ENCODE measurements at regions of chr3 and their contacts with region 1.

Region 1: GRCh38 chr3:50260027-50260941 is 8.7 kb upstream of the SEMA3B start:
- DNase-seq: peak; percentile 91
- ATAC-seq: peak; percentile 67
- H3K4me3 ChIP-seq: peak overlapping the region; percentile 50 to 76 (median 62); a peak in 5 of 6 replicates
- H3K27ac ChIP-seq: peak overlapping the region; percentile 99
- H3K4me1 ChIP-seq: peaks cover 60% of the 10 kb centered on the region
- H3K27me3 ChIP-seq: no peaks in the 10 kb centered on the region
- CTCF ChIP-seq: peak; percentile 92
- EP300 ChIP-seq: peak; percentile 85 to 92; a peak in 3 of 4 replicates
- POLR2A ChIP-seq: peak in 1 of 2 experiments; percentile 54; a peak in 1 of 4 replicates
- RAD21 ChIP-seq: peak; percentile 100

Region 2: DNA sequence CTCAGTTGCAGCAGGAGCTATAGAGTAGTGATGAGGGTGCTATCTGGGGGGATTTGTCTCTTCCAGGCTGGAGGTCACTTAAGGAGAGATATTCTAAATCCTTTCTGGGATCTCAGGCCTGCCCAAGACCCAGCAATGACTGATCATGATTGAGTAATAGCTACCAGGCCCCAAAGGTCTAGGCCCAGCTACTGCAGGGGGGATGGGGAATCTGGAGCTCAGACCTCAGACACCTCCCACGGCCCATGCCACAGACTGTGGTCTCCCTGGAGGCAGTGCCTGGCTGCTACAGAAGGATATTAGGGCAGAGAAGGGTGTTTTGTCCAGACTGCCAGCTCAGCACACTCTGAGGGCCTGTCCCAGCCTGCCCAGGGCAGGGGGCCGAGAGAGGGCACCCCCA is 48.4 kb before region 1 on chr3:
- CTCF ChIA-PET with region 1: no interaction called
- POLR2A ChIA-PET with region 1: interaction called, 82 read pairs
- in situ Hi-C with region 1: no loop called
- intact Hi-C with region 1: no loop called
- DNase-seq: no peak
- ATAC-seq: no peak
- H3K4me3 ChIP-seq: peak overlapping the region in 1 of 3 experiments; percentile 17; a peak in 1 of 6 replicates
- H3K27ac ChIP-seq: peak overlapping the region; percentile 99
- H3K4me1 ChIP-seq: peaks cover 74% of the 10 kb centered on the region
- H3K27me3 ChIP-seq: no peaks in the 10 kb centered on the region
- CTCF ChIP-seq: no peak
- EP300 ChIP-seq: no peak
- POLR2A ChIP-seq: no peak
- RAD21 ChIP-seq: no peak

Region 3: DNA sequence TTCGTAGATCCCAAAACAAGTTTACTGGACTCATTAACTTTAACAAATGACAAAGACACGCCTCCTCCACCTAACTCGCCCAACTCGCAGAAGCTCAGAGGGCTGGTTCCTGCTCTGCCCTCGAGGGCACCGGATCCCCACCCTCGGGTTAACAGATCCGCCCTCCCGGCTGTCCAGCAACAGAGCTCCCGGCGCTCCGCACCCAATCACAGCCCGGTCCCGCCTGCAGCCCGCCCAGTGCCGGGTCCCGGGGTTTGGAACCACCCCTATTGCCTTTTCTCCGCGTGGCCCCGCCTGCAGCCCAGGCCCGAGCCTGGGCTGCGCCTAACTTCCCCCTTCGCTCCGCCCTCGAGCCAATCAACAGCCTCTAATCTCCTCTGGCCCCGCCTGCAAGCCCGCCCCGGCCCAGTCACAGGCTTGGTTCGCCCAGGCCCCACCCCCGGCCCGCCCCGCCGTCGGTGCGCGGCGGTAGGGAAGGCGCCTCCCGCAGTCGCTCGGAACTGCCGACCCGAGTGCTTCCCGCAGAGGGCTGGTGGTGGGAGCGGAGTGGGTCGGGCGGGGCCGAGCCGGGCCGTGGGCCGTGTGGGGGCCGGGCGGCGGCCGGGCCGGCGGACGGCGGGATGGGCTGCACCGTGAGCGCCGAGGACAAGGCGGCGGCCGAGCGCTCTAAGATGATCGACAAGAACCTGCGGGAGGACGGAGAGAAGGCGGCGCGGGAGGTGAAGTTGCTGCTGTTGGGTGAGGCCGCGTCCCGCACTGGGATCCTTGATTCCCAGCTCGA is 24.4 kb before region 1 on chr3 and contains the start of gene GNAI2:
- CTCF ChIA-PET with region 1: no interaction called
- POLR2A ChIA-PET with region 1: interaction called, 32 read pairs
- in situ Hi-C with region 1: no loop called
- intact Hi-C with region 1: no loop called
- DNase-seq: peak; percentile 94
- ATAC-seq: peak; percentile 93
- H3K4me3 ChIP-seq: peak within 1 kb of the TSS; percentile 85 to 93 (median 87)
- H3K27ac ChIP-seq: peak within 1 kb of the TSS; percentile 61
- H3K4me1 ChIP-seq: peaks cover 59% of the 10 kb centered on the region
- H3K27me3 ChIP-seq: no peaks in the 10 kb centered on the region; a peak in 1 of 5 replicates
- CTCF ChIP-seq: no peak; the same call in 1 of the 2 replicates
- EP300 ChIP-seq: no peak
- POLR2A ChIP-seq: peak; percentile 66 to 92
- RAD21 ChIP-seq: peak; percentile 51
- total RNA-seq, gene GNAI2: 34.5 and 51.1 TPM in 2 replicates

Region 4: GRCh38 chr3:50278868-50279224 is 18.6 kb after region 1 on chr3 and contains the start of gene LSMEM2:
- CTCF ChIA-PET with region 1: interaction called, 81 read pairs
- POLR2A ChIA-PET with region 1: interaction called, 155 read pairs
- in situ Hi-C with region 1: no loop called
- intact Hi-C with region 1: no loop called
- DNase-seq: no peak
- ATAC-seq: peak; percentile 9
- H3K4me3 ChIP-seq: no peak within 1 kb of the TSS
- H3K27ac ChIP-seq: no peak within 1 kb of the TSS
- H3K4me1 ChIP-seq: peaks cover 37% of the 10 kb centered on the region
- H3K27me3 ChIP-seq: no peaks in the 10 kb centered on the region
- CTCF ChIP-seq: no peak
- EP300 ChIP-seq: no peak
- POLR2A ChIP-seq: no peak
- RAD21 ChIP-seq: no peak
- total RNA-seq, gene LSMEM2: 0.07 TPM in 1 of 2 replicates, not detected in the other

Region 5: DNA sequence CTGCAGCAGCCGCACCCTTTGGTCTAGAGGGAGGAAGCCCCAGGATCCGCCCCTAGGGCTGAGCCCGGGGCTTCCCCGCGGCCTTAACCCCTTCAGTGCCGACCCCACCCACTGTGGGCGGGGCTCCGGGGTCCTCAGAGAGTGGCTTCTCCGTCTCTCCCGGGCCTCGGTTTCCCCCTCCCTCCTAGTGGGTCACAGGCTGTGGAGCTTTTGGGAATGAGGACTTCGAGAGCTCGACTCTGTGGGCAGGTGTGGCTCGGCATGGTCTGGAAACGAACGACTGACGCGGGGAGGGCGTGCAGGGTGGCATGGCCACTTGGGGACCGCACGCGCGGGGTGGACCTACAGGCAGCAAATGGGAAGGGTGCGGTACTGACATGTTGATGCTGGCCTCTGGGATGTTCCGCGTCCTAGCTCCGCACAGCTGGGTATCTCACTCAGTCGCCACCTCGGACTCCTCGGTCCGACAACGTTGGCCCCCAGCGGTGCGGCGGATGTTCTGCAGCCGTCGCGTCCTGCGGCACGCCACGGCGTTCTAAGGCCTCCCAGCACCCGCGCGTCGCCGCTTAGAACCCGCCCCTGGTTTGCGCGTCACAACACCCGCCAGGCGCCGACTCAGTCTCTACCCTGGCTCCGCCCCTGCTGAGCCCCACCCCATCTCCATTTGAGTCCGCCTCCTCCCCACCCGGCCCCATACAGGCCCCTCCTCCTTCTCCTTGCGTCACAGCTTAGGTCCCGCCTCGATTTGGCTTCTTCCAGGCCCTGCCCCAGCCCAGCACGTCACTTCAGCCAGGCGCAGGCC is 38.8 kb after region 1 on chr3 and contains the starts of genes HYAL3 and NAA80:
- CTCF ChIA-PET with region 1: no interaction called
- POLR2A ChIA-PET with region 1: interaction called, 51 read pairs
- in situ Hi-C with region 1: no loop called
- intact Hi-C with region 1: loop called (anchors 5 kb)
- DNase-seq: no peak
- ATAC-seq: peak; percentile 53
- H3K4me3 ChIP-seq: peak within 1 kb of the TSS; percentile 66 to 91 (median 89)
- H3K27ac ChIP-seq: peak within 1 kb of the TSS; percentile 87
- H3K4me1 ChIP-seq: peaks cover 52% of the 10 kb centered on the region
- H3K27me3 ChIP-seq: no peaks in the 10 kb centered on the region; a peak in 1 of 5 replicates
- CTCF ChIP-seq: peak; percentile 54
- EP300 ChIP-seq: no peak
- POLR2A ChIP-seq: peak in 1 of 2 experiments; percentile 79; a peak in 2 of 4 replicates
- RAD21 ChIP-seq: peak; percentile 67; the same call in 1 of the 2 replicates
- total RNA-seq, gene HYAL3: 5.5 and 5.9 TPM in 2 replicates
- total RNA-seq, gene NAA80: 1.5 and 3.4 TPM in 2 replicates

Region 6: GRCh38 chr3:50327943-50328691 is 67.8 kb after region 1 on chr3 and contains the start of gene TUSC2:
- CTCF ChIA-PET with region 1: interaction called, 4 read pairs
- POLR2A ChIA-PET with region 1: interaction called, 16 read pairs
- in situ Hi-C with region 1: loop called (anchors 5 kb)
- intact Hi-C with region 1: no loop called
- DNase-seq: peak; percentile 95
- ATAC-seq: peak; percentile 79
- H3K4me3 ChIP-seq: peak within 1 kb of the TSS; percentile 79 to 95 (median 92)
- H3K27ac ChIP-seq: peak within 1 kb of the TSS; percentile 67
- H3K4me1 ChIP-seq: peaks cover 52% of the 10 kb centered on the region
- H3K27me3 ChIP-seq: no peaks in the 10 kb centered on the region
- CTCF ChIP-seq: no peak; the same call in 1 of the 2 replicates
- EP300 ChIP-seq: no peak
- POLR2A ChIP-seq: peak in 1 of 2 experiments; percentile 80; a peak in 2 of 4 replicates
- RAD21 ChIP-seq: peak; percentile 39; the same call in 1 of the 2 replicates
- total RNA-seq, gene TUSC2: 35.9 and 36.7 TPM in 2 replicates

Region 7: GRCh38 chr3:50971487-50971924 is 711.2 kb after region 1 on chr3:
- CTCF ChIA-PET with region 1: no interaction called
- POLR2A ChIA-PET with region 1: no interaction called
- in situ Hi-C with region 1: no loop called
- intact Hi-C with region 1: no loop called
- DNase-seq: peak; percentile 68
- ATAC-seq: peak; percentile 94
- H3K4me3 ChIP-seq: no peak overlapping the region
- H3K27ac ChIP-seq: no peak overlapping the region
- H3K4me1 ChIP-seq: no peaks in the 10 kb centered on the region
- H3K27me3 ChIP-seq: no peaks in the 10 kb centered on the region
- CTCF ChIP-seq: peak; percentile 91
- EP300 ChIP-seq: no peak
- POLR2A ChIP-seq: no peak
- RAD21 ChIP-seq: peak; percentile 84